ENCODE measurements at regions of chr7 and their contacts with region 1.

Region 1: GRCh38 chr7:20228654-20229053 is 11.5 kb upstream of the MACC1 start:
- DNase-seq: peak; percentile 50 to 54
- H3K4me3 ChIP-seq: no peak overlapping the region
- H3K4me3 Mint-ChIP-seq: no peak overlapping the region
- H3K27ac Mint-ChIP-seq: peak overlapping the region; percentile 60
- H3K4me1 ChIP-seq: peaks cover 40% of the 10 kb centered on the region
- H3K4me1 Mint-ChIP-seq: peaks cover 26% of the 10 kb centered on the region
- H3K27me3 ChIP-seq: no peaks in the 10 kb centered on the region
- H3K27me3 Mint-ChIP-seq: no peaks in the 10 kb centered on the region
- CTCF ChIP-seq: no peak

Region 2: GRCh38 chr7:20241194-20241910 is 12.7 kb after region 1 on chr7:
- CTCF ChIA-PET with region 1: no interaction called
- POLR2A ChIA-PET with region 1: no interaction called
- intact Hi-C with region 1: loop called (anchors 1 kb)
- DNase-seq: peak; percentile 28 to 56
- H3K4me3 ChIP-seq: no peak overlapping the region
- H3K4me3 Mint-ChIP-seq: no peak overlapping the region
- H3K27ac Mint-ChIP-seq: peak overlapping the region; percentile 71
- H3K4me1 ChIP-seq: peaks cover 26% of the 10 kb centered on the region
- H3K4me1 Mint-ChIP-seq: peaks cover 21% of the 10 kb centered on the region
- H3K27me3 ChIP-seq: no peaks in the 10 kb centered on the region
- H3K27me3 Mint-ChIP-seq: no peaks in the 10 kb centered on the region
- CTCF ChIP-seq: no peak

Measured in Caco-2 (cell line).